AG04450 (cell line): ENCODE measurements at regions of chr3 and their contacts with region 1.

Region 1: DNA sequence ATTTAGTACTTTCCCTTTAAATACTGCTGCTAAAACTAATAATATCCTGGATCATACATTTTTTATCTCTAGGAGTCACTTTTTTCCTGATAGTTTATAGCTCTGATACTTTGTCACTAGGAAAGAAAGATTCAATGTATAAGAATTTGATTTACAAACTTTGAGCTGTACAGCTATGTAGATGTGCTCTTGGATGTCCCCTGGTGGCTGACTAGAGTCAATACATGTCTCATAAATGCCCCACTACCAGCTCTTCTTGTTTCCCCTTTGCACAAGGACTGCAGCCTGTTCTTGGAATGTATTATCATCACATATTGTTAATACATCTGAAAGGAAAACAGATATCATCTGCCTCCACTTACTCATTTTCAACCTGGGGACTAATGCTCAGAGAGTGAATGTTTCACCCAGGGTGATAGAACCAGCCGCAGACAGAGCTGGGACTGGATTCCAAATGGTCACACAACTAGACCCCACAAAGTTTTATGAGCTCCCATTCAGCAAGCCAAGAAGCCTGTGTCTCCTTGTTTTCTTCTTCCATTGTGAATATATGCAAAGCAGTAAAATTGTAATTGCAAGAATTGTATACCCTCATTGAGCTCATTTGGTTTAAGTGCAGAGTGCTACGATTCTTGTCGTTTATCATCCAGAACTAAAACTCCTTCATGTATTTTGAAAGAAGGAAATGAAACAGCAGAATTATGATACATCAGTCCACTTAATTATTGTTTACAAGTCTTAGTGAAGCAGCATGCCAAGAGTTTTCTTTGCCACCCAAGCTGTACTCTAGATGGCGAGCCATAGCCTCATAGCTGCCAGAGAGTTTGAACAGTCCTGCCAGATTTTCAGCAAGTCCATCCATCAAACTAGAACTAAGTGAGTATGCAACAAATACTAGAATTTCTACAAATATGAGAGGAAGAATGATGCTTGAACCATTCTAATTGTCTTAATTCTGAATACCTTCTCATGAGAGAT is 261.6 kb upstream of the LMCD1 start:
- DNase-seq: peak; percentile 27
- H3K4me3 ChIP-seq: no peak overlapping the region
- H3K27ac ChIP-seq: no peak overlapping the region
- H3K27me3 ChIP-seq: no peaks in the 10 kb centered on the region
- CTCF ChIP-seq: peak; percentile 97

Region 2: GRCh38 chr3:8223766-8224165 is 16.2 kb before region 1 on chr3:
- CTCF ChIA-PET with region 1: interaction called, 15 read pairs
- POLR2A ChIA-PET with region 1: no interaction called
- DNase-seq: no peak
- H3K4me3 ChIP-seq: no peak overlapping the region
- H3K27ac ChIP-seq: no peak overlapping the region
- H3K27me3 ChIP-seq: no peaks in the 10 kb centered on the region
- CTCF ChIP-seq: no peak

Region 3: DNA sequence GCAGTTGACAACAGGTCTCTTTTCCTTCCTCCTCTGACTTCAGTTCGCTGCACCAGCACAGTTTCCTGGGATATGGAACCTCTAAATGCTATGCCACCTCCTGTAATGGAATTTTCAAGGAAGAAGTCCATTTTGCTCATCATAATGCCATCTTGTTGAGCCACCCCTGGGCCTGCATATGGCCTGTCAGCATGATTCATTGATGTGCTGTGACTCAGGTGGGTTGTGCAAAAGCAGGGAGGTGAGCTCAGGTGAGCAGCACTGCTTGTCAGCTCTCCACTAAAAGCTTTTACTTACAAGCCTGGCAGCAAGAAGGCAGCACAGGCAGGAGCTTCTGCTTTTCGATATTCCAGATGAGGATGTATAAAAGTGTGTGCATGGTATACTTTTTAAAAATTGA is 14.5 kb after region 1 on chr3:
- CTCF ChIA-PET with region 1: interaction called, 15 read pairs
- POLR2A ChIA-PET with region 1: no interaction called
- DNase-seq: no peak
- H3K4me3 ChIP-seq: no peak overlapping the region
- H3K27ac ChIP-seq: no peak overlapping the region
- H3K27me3 ChIP-seq: no peaks in the 10 kb centered on the region
- CTCF ChIP-seq: no peak

Region 4: DNA sequence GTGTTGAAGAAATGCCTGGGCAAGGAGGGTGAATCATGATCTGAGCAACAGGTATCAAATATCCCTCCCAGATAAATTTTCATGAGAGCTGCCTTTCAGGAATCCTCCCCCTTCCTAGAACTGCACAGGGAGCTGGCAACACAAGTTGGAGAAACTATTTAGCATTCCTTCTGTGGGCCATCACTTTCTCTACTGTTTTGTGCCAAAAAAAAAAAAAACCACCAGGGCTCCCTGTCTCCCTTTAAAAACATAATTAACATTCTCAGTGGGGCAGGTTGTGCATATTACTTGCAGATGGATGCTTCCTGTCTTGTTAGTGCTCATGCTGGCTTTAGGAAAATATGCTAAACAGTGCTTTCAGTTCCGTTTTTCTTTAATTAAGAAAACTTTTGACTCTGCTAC is 26.7 kb after region 1 on chr3:
- CTCF ChIA-PET with region 1: interaction called, 12 read pairs
- POLR2A ChIA-PET with region 1: no interaction called
- DNase-seq: no peak
- H3K4me3 ChIP-seq: no peak overlapping the region
- H3K27ac ChIP-seq: no peak overlapping the region
- H3K27me3 ChIP-seq: no peaks in the 10 kb centered on the region
- CTCF ChIP-seq: no peak

Region 5: DNA sequence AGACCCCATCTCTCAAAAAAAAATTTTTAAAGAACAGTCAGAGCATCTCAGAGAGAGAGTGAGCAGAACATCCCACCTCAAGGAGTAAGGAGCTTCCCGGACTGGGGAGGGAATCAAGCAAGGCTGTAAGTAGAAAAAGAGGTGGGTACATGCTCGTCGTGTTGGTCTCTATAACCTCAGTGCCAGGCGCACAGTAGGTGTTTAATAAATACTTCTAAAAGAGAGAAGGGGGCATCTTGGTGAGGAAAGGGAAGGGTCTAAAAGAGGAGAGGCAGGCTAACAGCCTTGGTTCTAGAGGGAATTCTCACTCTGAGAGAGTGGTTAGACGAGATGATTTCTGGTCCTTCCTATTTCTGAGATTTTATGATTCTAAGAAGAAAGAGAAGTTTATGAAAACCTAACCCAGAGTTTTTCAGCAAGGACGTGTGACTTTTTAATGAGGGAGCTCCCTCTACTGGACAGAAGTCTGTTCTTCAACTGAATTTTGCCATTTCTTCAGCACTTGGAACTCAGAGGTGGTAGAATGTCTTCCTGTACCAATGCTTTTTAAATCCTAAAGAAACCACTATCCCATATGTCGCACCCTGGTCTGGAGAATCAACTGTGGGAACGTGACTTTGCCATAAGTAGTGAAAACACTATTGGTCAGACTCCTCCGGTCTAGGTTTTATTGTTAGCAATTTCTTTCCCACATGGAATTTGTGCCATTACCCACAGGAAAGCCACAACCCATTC is 61.9 kb after region 1 on chr3:
- CTCF ChIA-PET with region 1: interaction called, 12 read pairs
- POLR2A ChIA-PET with region 1: no interaction called
- DNase-seq: peak; percentile 20
- H3K4me3 ChIP-seq: no peak overlapping the region
- H3K27ac ChIP-seq: no peak overlapping the region
- H3K27me3 ChIP-seq: peaks cover 2% of the 10 kb centered on the region
- CTCF ChIP-seq: peak; percentile 76